ENCODE measurements at regions of chr20 and their contacts with region 1.

Region 1: DNA sequence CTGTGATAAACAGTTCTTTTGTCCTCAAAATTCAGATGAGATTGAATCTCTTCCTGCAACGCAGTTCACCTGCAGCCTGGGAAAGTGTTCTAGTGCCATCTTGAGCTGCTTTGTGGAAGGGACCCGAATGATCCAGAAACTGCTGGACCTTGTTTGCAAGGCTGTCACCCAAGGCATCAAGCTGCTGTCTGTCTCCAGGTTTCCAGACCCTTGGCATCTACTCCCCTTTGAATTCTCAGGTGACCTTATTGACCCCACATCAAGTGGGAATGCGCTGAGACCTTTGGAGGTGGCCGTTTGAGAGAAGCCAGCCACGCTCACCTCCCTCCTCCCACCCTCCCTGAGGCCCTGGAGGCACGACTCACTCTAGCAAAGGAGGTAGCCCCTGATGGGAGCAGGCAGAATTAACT is 112.5 kb downstream of the EDN3 start:
- DNase-seq: peak; percentile 33
- ATAC-seq: peak; percentile 47
- H3K4me3 Mint-ChIP-seq: no peak overlapping the region
- H3K27ac Mint-ChIP-seq: no peak overlapping the region
- H3K4me1 Mint-ChIP-seq: peaks cover 12% of the 10 kb centered on the region
- H3K27me3 Mint-ChIP-seq: peaks cover 5% of the 10 kb centered on the region; the same call in 1 of the 2 replicates
- CTCF ChIP-seq: no peak

Region 2: DNA sequence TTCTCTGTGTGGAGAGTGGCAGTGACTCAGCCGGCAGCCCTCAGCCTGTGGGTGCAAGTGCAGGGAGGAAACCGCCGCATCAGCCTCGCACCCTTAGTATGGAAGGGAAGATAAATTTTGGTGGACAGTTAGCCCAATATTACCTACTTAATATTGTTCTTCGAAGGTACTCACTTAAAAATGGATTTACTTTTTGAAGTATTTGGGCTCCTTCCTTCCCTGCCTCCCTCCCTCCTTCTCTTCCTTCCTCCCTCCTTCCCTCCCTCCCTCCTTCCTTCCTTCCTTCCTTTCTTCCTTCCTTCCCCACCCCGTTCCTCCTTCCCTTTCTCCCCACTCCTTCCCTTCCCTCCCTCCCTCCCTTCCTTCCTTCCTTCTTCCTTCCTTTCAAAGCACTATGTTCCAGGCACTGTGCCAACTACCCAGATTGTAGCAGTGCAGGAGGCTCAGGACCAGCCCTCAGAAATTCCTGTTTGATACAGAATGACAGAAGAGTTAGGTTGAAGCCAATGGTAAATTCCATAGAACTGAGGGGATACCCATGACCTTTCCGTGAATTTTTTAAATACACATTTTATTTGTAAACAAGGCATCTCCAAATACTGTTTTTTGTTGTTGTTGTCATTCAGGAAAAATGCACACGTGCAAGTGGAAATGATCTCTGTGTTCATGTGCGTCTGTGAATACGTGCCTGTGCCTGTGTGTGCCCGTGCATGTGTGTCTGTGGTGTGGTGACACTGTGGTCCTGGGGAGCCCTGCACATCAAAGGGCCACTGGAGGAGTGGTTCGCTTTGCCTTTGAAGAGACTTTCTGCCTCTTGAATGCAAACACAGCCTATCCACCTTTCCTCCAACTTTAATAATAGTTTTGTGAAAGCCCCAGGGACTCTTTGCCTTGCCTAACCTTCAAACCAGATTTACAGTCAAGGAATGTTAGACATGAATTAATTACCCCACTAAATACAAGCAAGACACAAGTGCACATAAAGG is 29.3 kb after region 1 on chr20:
- CTCF ChIA-PET with region 1: no interaction called
- POLR2A ChIA-PET with region 1: no interaction called
- DNase-seq: no peak
- ATAC-seq: no peak
- H3K4me3 Mint-ChIP-seq: no peak overlapping the region
- H3K27ac Mint-ChIP-seq: no peak overlapping the region
- H3K4me1 Mint-ChIP-seq: peaks cover 7% of the 10 kb centered on the region
- H3K27me3 Mint-ChIP-seq: peaks cover 6% of the 10 kb centered on the region; the same call in 1 of the 2 replicates
- CTCF ChIP-seq: no peak

Region 3: GRCh38 chr20:59455402-59456341 is 42.8 kb after region 1 on chr20:
- CTCF ChIA-PET with region 1: interaction called, 10 read pairs
- POLR2A ChIA-PET with region 1: no interaction called
- DNase-seq: no peak
- ATAC-seq: peak; percentile 57
- H3K4me3 Mint-ChIP-seq: no peak overlapping the region
- H3K27ac Mint-ChIP-seq: no peak overlapping the region
- H3K4me1 Mint-ChIP-seq: peaks cover 12% of the 10 kb centered on the region; the same call in 1 of the 2 replicates
- H3K27me3 Mint-ChIP-seq: peaks cover 7% of the 10 kb centered on the region
- CTCF ChIP-seq: peak; percentile 45; the same call in 1 of the 2 replicates

Region 4: GRCh38 chr20:59537991-59538390 is 125.1 kb after region 1 on chr20:
- CTCF ChIA-PET with region 1: no interaction called
- POLR2A ChIA-PET with region 1: no interaction called
- DNase-seq: no peak
- ATAC-seq: no peak
- H3K4me3 Mint-ChIP-seq: no peak overlapping the region
- H3K27ac Mint-ChIP-seq: no peak overlapping the region
- H3K4me1 Mint-ChIP-seq: no peaks in the 10 kb centered on the region
- H3K27me3 Mint-ChIP-seq: peaks cover 49% of the 10 kb centered on the region
- CTCF ChIP-seq: no peak

Measured in WTC11 (cell line).